ENCODE measurements at regions of chr2 and their contacts with region 1.

Region 1: DNA sequence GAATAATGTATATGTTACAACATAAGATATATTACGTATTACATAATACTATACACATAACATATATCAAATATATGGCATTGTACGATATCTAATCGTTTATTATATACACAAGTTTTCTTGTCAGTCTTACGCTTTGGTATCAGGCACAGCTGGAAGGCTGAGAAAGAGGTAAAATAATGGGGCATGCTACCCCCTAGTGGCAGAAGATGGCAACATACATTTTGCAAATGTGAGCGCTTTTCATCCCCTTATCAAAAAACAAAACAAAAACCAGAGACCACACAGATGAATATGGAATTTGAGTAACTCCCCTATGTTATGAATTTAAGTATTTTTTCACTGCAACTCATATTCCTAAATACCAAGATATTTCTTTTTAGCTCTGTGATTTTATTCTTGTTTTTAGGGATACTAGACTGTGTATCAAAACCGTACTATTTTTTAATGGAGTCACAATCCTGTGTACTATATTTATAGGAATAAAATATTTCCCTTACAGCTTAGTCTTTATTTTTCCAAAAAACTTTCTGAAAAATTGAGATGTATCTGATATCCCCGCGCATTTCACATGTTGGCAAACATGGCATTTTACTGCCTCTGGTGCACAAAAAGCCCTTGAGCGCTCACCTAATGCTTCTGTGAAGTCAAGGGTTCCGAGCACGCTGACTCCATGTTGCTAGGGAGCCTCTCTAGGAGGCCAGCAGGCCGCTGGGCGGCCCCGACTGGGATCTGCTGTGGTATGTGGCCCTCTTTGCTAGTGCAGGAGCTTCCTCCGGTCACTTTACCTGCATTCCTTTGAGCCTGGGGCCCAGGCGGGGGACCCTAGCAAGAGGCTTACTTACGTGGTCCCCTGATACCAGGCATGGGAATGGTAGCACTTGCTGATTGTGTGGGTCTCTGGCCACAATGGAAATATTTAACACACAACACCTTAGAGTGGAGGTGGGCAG is 62.5 kb downstream of the SLC4A3 start:
- H3K4me3 ChIP-seq: no peak overlapping the region
- H3K27ac ChIP-seq: no peak overlapping the region
- H3K4me1 ChIP-seq: no peaks in the 10 kb centered on the region
- CTCF ChIP-seq: no peak

Region 2: GRCh38 chr2:219642465-219643080 is 47.4 kb before region 1 on chr2:
- CTCF ChIA-PET with region 1: interaction called, 43 read pairs
- POLR2A ChIA-PET with region 1: no interaction called
- H3K4me3 ChIP-seq: no peak overlapping the region
- H3K27ac ChIP-seq: no peak overlapping the region
- H3K4me1 ChIP-seq: no peaks in the 10 kb centered on the region
- CTCF ChIP-seq: peak; percentile 100

Region 3: GRCh38 chr2:219650426-219651248 is 39.3 kb before region 1 on chr2:
- CTCF ChIA-PET with region 1: interaction called, 43 read pairs
- POLR2A ChIA-PET with region 1: no interaction called
- H3K4me3 ChIP-seq: no peak overlapping the region
- H3K27ac ChIP-seq: no peak overlapping the region
- H3K4me1 ChIP-seq: no peaks in the 10 kb centered on the region
- CTCF ChIP-seq: no peak

Region 4: DNA sequence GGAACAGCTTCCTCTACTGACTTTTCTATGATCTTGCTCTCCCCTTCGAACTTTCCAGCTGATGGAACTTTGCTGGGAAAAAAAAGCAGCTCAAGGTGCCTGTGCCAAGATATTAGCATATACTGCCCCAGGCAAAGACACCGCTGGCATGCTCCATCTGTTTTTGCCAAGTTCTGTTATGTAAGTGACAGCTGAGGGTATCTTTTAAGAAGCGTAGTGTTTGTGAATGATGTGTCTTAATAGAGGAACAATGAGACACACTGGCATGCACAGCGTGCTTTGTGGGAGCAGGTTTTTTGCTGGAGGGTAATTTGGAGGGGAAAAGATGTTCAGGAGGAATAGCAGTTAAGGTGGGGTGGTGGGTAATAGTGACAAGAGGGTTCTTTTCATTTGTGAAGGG is 14.7 kb before region 1 on chr2:
- CTCF ChIA-PET with region 1: interaction called, 20 read pairs
- POLR2A ChIA-PET with region 1: no interaction called
- H3K4me3 ChIP-seq: no peak overlapping the region
- H3K27ac ChIP-seq: no peak overlapping the region
- H3K4me1 ChIP-seq: no peaks in the 10 kb centered on the region
- CTCF ChIP-seq: no peak

Region 5: GRCh38 chr2:219701847-219702634 is 12.1 kb after region 1 on chr2:
- CTCF ChIA-PET with region 1: interaction called, 21 read pairs
- POLR2A ChIA-PET with region 1: interaction called, 5 read pairs
- H3K4me3 ChIP-seq: no peak overlapping the region
- H3K27ac ChIP-seq: no peak overlapping the region
- H3K4me1 ChIP-seq: peaks cover 10% of the 10 kb centered on the region
- CTCF ChIP-seq: no peak

Region 6: GRCh38 chr2:219707496-219708285 is 17.7 kb after region 1 on chr2:
- CTCF ChIA-PET with region 1: interaction called, 21 read pairs
- POLR2A ChIA-PET with region 1: interaction called, 5 read pairs
- H3K4me3 ChIP-seq: no peak overlapping the region
- H3K27ac ChIP-seq: 0 out of 2 replicates have a peak overlapping the region, but pooled peaks have one; percentile 8
- H3K4me1 ChIP-seq: peaks cover 19% of the 10 kb centered on the region
- CTCF ChIP-seq: no peak

Measured in HEK293 (cell line).